Calu3 (cell line): ENCODE measurements at regions of chr6 and their contacts with region 1.

Region 1: DNA sequence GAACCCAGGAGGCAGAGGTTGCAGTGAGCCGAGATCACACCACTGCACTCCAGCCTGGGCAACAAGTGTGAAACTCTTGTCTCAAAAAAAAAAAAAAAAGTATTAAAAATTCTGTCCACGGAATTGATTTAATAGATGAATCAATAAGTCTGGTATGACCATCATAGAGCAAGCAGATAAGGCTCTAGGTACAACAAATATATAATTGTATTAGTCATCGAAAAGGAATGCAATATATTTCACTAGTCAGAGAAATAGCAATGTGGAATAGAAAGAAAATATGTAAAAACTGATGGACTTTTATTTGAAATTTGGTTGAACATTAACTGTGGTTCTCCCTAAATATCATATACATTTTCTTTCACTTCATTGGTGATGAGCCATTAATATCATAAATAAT is 476.8 kb upstream of the AGPAT4 start:
- DNase-seq: no peak
- H3K4me3 Mint-ChIP-seq: no peak overlapping the region
- H3K27ac Mint-ChIP-seq: peak overlapping the region; percentile 37
- H3K4me1 Mint-ChIP-seq: peaks cover 13% of the 10 kb centered on the region
- H3K27me3 Mint-ChIP-seq: no peaks in the 10 kb centered on the region
- CTCF ChIP-seq: no peak

Region 2: GRCh38 chr6:161439093-161439492 is 311.6 kb before region 1 on chr6:
- CTCF ChIA-PET with region 1: no interaction called
- intact Hi-C with region 1: loop called (anchors 10 kb)
- DNase-seq: peak; percentile 76
- H3K4me3 Mint-ChIP-seq: peak overlapping the region; percentile 62
- H3K27ac Mint-ChIP-seq: peak overlapping the region; percentile 55
- H3K4me1 Mint-ChIP-seq: peaks cover 29% of the 10 kb centered on the region
- H3K27me3 Mint-ChIP-seq: no peaks in the 10 kb centered on the region
- CTCF ChIP-seq: no peak

Region 3: GRCh38 chr6:161498359-161498758 is 252.3 kb before region 1 on chr6:
- CTCF ChIA-PET with region 1: no interaction called
- intact Hi-C with region 1: no loop called
- DNase-seq: peak; percentile 74
- H3K4me3 Mint-ChIP-seq: no peak overlapping the region
- H3K27ac Mint-ChIP-seq: peak overlapping the region; percentile 37
- H3K4me1 Mint-ChIP-seq: peaks cover 16% of the 10 kb centered on the region
- H3K27me3 Mint-ChIP-seq: peaks cover 13% of the 10 kb centered on the region
- CTCF ChIP-seq: peak; percentile 66

Region 4: DNA sequence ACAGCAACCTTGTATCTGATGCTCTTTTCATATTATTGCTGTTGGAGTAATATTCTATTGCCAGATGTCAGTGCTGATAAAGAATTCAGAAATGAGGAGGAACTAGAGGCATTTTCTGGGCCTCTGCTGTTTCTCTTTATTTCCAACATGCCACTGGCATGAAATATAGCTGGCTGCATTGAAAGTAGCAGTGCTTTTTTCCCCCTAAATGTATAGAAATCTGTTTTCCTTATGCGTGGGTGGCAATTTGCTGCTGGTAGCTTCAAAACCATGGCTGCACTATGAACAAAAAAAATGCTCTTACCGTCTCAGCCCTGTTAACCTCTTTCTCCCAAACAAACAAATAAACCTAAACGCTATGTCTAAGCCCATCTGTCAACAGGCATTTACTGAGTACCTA is 34.5 kb before region 1 on chr6:
- CTCF ChIA-PET with region 1: no interaction called
- intact Hi-C with region 1: no loop called
- DNase-seq: no peak
- H3K4me3 Mint-ChIP-seq: no peak overlapping the region
- H3K27ac Mint-ChIP-seq: no peak overlapping the region
- H3K4me1 Mint-ChIP-seq: no peaks in the 10 kb centered on the region
- H3K27me3 Mint-ChIP-seq: no peaks in the 10 kb centered on the region
- CTCF ChIP-seq: no peak

Region 5: GRCh38 chr6:162099685-162100084 is 349.0 kb after region 1 on chr6:
- CTCF ChIA-PET with region 1: no interaction called
- intact Hi-C with region 1: loop called (anchors 5 kb)
- DNase-seq: peak; percentile 54
- H3K4me3 Mint-ChIP-seq: peak overlapping the region; percentile 31
- H3K27ac Mint-ChIP-seq: peak overlapping the region; percentile 95
- H3K4me1 Mint-ChIP-seq: peaks cover 14% of the 10 kb centered on the region
- H3K27me3 Mint-ChIP-seq: no peaks in the 10 kb centered on the region
- CTCF ChIP-seq: no peak

Region 6: GRCh38 chr6:162727309-162728182 is 976.9 kb after region 1 on chr6 and contains the starts of genes PACRG and PRKN:
- CTCF ChIA-PET with region 1: no interaction called
- intact Hi-C with region 1: loop called (anchors 10 kb)
- DNase-seq: peak; percentile 100
- H3K4me3 Mint-ChIP-seq: peak within 1 kb of the TSS; percentile 80
- H3K27ac Mint-ChIP-seq: peak within 1 kb of the TSS; percentile 89
- H3K4me1 Mint-ChIP-seq: peaks cover 10% of the 10 kb centered on the region
- H3K27me3 Mint-ChIP-seq: no peaks in the 10 kb centered on the region
- CTCF ChIP-seq: no peak
- total RNA-seq, gene PACRG: 1.5 TPM in 1 of 2 replicates, not detected in the other
- total RNA-seq, gene PRKN: 2.4 and 3.8 TPM in 2 replicates